ENCODE measurements at regions of chr6 and their contacts with region 1.

Region 1: GRCh38 chr6:166950443-166950821 is 5.9 kb downstream of the RNASET2 start:
- DNase-seq: no peak
- H3K4me3 Mint-ChIP-seq: peak overlapping the region; percentile 78
- H3K27ac Mint-ChIP-seq: peak overlapping the region; percentile 89
- H3K4me1 Mint-ChIP-seq: peaks cover 54% of the 10 kb centered on the region
- H3K27me3 Mint-ChIP-seq: no peaks in the 10 kb centered on the region

Region 2: DNA sequence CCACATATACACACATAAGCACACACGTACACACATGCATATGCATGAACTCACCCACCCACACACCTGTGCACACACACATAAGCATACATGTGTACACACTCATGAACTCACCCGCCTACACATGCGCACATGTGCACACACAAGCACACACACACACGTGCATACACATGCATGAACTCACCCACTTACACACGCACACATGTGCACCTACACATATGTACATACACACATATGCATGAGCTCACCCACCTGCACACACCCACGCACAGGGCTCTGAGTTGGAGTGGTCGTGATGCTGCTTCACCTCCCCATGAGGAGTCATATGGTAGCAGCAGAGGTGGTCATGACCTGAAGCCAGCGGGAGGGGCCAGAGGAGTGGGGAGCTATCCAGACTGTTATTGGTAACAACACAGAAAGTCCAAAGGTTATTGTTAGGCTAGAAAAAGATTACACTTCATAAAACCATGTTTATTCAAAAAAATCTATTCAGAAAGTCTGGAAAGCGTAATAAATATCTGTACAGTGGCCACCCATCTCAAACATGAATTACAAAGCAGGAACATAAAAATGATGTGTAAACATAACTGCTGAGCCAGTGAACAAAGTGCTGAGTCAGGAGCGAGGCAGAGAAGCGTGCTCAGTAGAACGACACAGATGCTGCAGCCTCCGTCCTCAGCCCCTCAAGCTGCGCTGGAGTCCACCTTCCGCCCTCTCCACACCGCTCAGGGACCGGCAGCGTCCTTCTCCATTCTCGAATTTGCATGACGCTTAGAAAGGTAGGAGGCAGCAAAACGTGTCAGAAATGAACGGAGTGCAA is 541.3 kb before region 1 on chr6:
- intact Hi-C with region 1: no loop called
- DNase-seq: no peak
- H3K4me3 Mint-ChIP-seq: no peak overlapping the region
- H3K27ac Mint-ChIP-seq: no peak overlapping the region
- H3K4me1 Mint-ChIP-seq: peaks cover 23% of the 10 kb centered on the region
- H3K27me3 Mint-ChIP-seq: peaks cover 25% of the 10 kb centered on the region

Region 3: GRCh38 chr6:166627033-166627874 is 323.2 kb before region 1 on chr6 and contains the start of gene RPS6KA2:
- intact Hi-C with region 1: loop called (anchors 2 kb)
- DNase-seq: peak; percentile 100
- H3K4me3 Mint-ChIP-seq: peak within 1 kb of the TSS; percentile 87
- H3K27ac Mint-ChIP-seq: peak within 1 kb of the TSS; percentile 79
- H3K4me1 Mint-ChIP-seq: peaks cover 29% of the 10 kb centered on the region
- H3K27me3 Mint-ChIP-seq: peaks cover 48% of the 10 kb centered on the region
- total RNA-seq, gene RPS6KA2: 2.0 and 2.7 TPM in 2 replicates

Region 4: DNA sequence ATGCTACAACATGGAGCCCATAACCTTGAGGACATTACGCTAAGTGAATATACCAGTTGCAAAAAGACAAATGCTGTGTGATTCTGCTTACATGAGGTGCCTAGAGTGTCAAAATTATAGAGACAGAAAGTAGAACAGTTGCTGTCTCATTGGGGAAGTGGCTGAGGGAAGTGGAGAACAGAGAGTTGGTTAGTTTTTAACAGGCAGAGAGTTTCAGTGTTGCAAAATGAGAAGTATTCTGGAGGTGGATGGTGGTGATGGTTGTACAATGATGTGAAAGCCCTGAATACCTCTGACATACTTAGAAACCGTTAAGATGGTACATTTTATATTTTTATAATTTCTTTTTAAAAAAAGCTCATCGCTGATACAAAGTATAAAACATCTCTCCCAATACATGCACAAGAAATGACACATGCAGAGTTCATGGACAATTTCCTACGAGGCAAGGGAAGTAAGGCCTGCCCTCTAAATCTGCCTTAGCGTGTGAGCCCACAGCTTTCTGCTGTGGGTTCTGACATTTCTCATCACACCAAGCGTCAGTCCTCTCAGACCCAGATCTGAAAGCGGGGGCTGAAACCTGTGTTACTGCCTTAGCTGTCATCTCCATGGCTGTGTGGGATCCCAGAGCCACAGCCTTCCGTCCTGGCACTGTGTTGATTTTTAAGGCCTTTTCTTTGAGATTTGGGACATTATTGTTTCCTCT is 120.1 kb before region 1 on chr6:
- intact Hi-C with region 1: loop called (anchors 1 kb)
- DNase-seq: no peak
- H3K4me3 Mint-ChIP-seq: no peak overlapping the region
- H3K27ac Mint-ChIP-seq: peak overlapping the region; percentile 77
- H3K4me1 Mint-ChIP-seq: peaks cover 22% of the 10 kb centered on the region
- H3K27me3 Mint-ChIP-seq: peaks cover 3% of the 10 kb centered on the region

Region 5: GRCh38 chr6:166989427-166990032 is 39.1 kb after region 1 on chr6:
- intact Hi-C with region 1: loop called (anchors 2 kb)
- DNase-seq: peak; percentile 39
- H3K4me3 Mint-ChIP-seq: no peak overlapping the region
- H3K27ac Mint-ChIP-seq: no peak overlapping the region
- H3K4me1 Mint-ChIP-seq: peaks cover 46% of the 10 kb centered on the region
- H3K27me3 Mint-ChIP-seq: peaks cover 1% of the 10 kb centered on the region

Region 6: GRCh38 chr6:167350731-167351655 is 400.6 kb after region 1 on chr6:
- intact Hi-C with region 1: loop called (anchors 2 kb)
- DNase-seq: peak; percentile 72
- H3K4me3 Mint-ChIP-seq: peak overlapping the region; percentile 84
- H3K27ac Mint-ChIP-seq: peak overlapping the region; percentile 78
- H3K4me1 Mint-ChIP-seq: peaks cover 24% of the 10 kb centered on the region
- H3K27me3 Mint-ChIP-seq: peaks cover 33% of the 10 kb centered on the region

Measured in activated T-helper 1 cell treated with anti-CD3 and anti-CD28 coated beads, Interleukin-12 subunit alpha, Interleukin-12 subunit beta, Interleukin-2, Interleukin-4 antibody, amounts not matched to agents 30 ng/mL and 10 ng/mL and 1 ng/mL, durations not matched to agents 14 hours and 24 hours and 36 hours (primary cell).